Ascending aorta (tissue), 2 donors: ENCODE measurements at regions of chr1 and their contacts with region 1.

Region 1: DNA sequence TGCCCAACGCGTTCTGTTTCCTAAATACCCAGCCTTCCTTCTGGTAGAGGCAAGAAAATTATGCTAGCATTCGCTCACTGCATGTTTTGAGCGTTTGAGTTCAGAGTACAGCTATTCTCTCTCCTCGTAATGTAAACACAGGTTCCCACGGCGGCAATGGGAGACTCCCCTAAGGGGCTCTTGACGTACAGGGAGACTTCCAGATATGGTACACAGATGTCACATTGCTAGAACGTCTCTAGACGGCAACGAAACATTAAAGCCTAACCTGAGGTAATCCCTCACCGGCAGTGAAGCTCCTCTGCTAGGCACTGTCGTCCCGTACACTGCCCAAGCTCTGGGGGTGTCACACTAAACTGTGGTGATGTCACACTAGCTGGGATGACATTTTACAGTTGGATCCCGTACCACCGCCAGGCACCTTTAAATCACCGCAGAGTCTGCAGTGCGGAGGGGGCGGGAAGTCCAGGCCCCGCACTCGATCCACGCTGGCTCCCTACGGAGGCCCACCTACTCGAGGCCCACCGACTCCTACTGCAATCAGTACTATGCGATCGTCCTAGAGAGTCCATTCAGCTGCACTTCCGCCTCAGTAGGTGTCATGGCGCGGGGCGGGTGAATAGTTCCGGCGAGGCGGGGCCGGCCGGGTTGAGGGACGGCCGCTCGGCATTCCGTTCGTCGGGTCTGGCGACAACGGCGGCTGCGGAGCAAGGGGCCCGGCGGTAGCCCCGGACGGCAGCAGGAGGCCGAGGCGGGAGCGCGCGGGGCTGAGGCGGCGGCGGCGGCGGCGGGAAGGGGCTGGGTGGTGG is at the start of gene HIPK1:
- DNase-seq: peak; percentile 67 to 96
- H3K4me3 ChIP-seq: peak within 1 kb of the TSS; percentile 83 to 90
- H3K27ac ChIP-seq: peak within 1 kb of the TSS; percentile 92 to 94
- H3K4me1 ChIP-seq: peaks cover 4 to 33% of the 10 kb centered on the region in 2 donors
- H3K27me3 ChIP-seq: no peaks in the 10 kb centered on the region
- CTCF ChIP-seq: peak in 1 of 3 experiments; percentile 35
- total RNA-seq, gene HIPK1: 41.7 TPM

Region 2: GRCh38 chr1:113811888-113812660 is 117.1 kb before region 1 on chr1 and contains the start of gene RSBN1:
- intact Hi-C with region 1: loop called (anchors 1 kb)
- DNase-seq: peak; percentile 99 to 100
- H3K4me3 ChIP-seq: peak within 1 kb of the TSS; percentile 82 to 91
- H3K27ac ChIP-seq: peak within 1 kb of the TSS; percentile 95 to 97
- H3K4me1 ChIP-seq: peaks cover 0 to 5% of the 10 kb centered on the region in 2 donors
- H3K27me3 ChIP-seq: no peaks in the 10 kb centered on the region
- CTCF ChIP-seq: peak in 1 of 3 experiments; percentile 7
- total RNA-seq, gene RSBN1: 22.7 TPM

Region 3: DNA sequence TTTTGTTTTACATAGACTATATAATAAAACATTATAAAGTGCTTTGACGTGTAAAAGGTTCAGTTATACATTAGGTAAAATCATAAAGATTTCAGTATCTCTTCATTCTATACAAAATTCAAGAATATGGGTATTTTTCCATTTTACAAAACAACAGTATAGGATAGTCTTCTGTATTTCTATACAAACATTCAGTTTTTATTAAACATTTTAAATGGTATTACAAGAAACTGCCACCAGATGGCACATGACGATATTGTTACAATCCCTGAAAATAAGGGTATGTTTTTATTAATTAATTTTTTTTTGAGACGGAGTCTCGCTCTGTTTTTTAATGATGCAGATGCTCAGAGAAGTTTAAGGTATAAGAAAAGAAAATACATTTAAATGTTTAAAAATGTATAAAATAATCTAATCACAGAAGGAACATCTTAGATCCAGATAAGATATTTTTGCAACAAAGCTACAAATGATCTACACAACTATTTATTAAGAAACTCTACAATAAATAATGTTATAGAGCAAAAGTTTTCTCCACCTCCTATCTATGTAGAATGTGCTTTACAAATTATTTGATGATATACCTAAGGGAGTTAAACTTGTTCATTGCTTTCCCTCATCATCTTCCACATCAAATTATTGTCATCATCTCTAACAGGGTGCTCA is 93.4 kb before region 1 on chr1:
- intact Hi-C with region 1: loop called (anchors 5 kb)
- DNase-seq: no peak
- H3K4me3 ChIP-seq: no peak overlapping the region
- H3K27ac ChIP-seq: no peak overlapping the region
- H3K4me1 ChIP-seq: no peaks in the 10 kb centered on the region
- H3K27me3 ChIP-seq: no peaks in the 10 kb centered on the region
- CTCF ChIP-seq: peak; percentile 45 to 62 (median 46)

Region 4: DNA sequence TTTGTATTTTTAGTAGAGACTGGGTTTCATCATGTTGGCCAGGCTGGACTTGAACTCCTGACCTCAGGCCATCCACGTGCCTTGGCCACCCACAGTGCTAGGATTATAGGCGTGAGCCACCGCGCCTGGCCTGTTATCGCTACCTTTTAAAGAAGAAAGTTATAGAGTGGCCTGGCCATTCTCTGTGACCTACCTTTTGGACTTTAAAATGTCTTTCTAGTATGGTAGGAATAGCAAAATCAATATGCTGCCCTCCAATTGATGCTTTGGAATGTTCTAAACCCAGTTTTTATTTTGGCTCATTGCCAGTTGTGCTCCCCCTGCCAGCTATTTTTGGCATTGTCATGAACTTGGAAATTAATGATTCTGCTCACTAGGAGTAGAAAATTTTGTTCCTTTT is 19.9 kb after region 1 on chr1:
- intact Hi-C with region 1: loop called (anchors 2 kb)
- DNase-seq: no peak
- H3K4me3 ChIP-seq: peak overlapping the region in 1 of 2 donors; percentile 4
- H3K27ac ChIP-seq: peak overlapping the region; percentile 31 to 54
- H3K4me1 ChIP-seq: peaks cover 4 to 28% of the 10 kb centered on the region in 2 donors
- H3K27me3 ChIP-seq: no peaks in the 10 kb centered on the region
- CTCF ChIP-seq: peak; percentile 13 to 37 (median 18)